HCT116 (cell line): ENCODE measurements at regions of chr17 and their contacts with region 1.

Region 1: DNA sequence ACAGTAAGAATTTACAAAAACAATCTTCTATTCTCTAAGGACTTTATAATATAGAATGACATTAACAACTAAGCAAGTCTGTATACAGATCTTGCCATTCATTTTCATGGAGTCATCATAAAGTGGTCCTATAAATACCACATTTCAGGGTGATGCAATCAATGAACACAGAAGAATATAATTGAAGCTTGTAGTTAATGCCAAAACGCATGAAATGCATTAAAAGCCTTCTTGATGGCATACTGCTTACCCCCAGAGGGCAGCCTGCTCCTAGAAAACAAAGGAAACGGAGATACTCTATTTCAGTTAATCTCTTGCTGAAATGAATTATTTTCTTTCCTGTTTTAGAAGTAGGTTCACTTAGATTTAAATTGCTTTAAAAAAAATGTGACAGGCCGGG is 45.2 kb upstream of the STAC2 start:
- DNase-seq: peak; percentile 8
- ATAC-seq: no peak
- H3K4me3 ChIP-seq: no peak overlapping the region
- H3K27ac ChIP-seq: no peak overlapping the region
- H3K4me1 ChIP-seq: no peaks in the 10 kb centered on the region
- H3K27me3 ChIP-seq: no peaks in the 10 kb centered on the region
- CTCF ChIP-seq: peak; percentile 23 to 42 (median 32); a peak in 3 of 6 replicates
- POLR2A ChIP-seq: no peak
- RAD21 ChIP-seq: peak; percentile 62

Region 2: DNA sequence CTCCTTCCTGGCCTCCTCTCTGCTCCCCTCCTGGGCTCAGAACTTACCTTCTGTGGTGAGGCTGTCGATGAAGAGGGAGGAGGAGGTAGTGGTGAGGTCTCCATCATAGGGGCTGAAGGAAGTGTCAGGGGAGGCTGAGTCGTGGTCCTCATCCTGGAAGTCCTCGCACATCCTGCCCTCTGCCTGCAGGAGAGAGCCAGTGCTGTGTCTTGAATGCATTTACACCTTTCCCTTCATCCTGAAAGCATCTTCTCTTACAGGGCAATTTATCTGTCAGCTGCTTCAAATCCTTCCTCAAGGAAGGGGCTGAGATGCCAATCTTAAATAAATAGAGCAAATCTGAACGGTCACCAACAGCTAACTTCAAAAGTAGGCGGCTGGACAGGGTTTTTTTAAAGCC is 193.1 kb before region 1 on chr17:
- CTCF ChIA-PET with region 1: no interaction called
- POLR2A ChIA-PET with region 1: no interaction called
- RAD21 ChIA-PET with region 1: no interaction called
- intact Hi-C with region 1: no loop called
- DNase-seq: no peak
- ATAC-seq: no peak
- H3K4me3 ChIP-seq: no peak overlapping the region
- H3K27ac ChIP-seq: no peak overlapping the region
- H3K4me1 ChIP-seq: no peaks in the 10 kb centered on the region
- H3K27me3 ChIP-seq: no peaks in the 10 kb centered on the region
- CTCF ChIP-seq: no peak
- POLR2A ChIP-seq: no peak
- RAD21 ChIP-seq: peak; percentile 18; the same call in 1 of the 2 replicates

Region 3: GRCh38 chr17:39294060-39294459 is 23.1 kb after region 1 on chr17:
- CTCF ChIA-PET with region 1: no interaction called
- POLR2A ChIA-PET with region 1: no interaction called
- RAD21 ChIA-PET with region 1: no interaction called
- intact Hi-C with region 1: no loop called
- DNase-seq: no peak
- ATAC-seq: no peak
- H3K4me3 ChIP-seq: no peak overlapping the region
- H3K27ac ChIP-seq: no peak overlapping the region
- H3K4me1 ChIP-seq: no peaks in the 10 kb centered on the region
- H3K27me3 ChIP-seq: no peaks in the 10 kb centered on the region
- CTCF ChIP-seq: no peak
- POLR2A ChIP-seq: no peak
- RAD21 ChIP-seq: no peak

Region 4: DNA sequence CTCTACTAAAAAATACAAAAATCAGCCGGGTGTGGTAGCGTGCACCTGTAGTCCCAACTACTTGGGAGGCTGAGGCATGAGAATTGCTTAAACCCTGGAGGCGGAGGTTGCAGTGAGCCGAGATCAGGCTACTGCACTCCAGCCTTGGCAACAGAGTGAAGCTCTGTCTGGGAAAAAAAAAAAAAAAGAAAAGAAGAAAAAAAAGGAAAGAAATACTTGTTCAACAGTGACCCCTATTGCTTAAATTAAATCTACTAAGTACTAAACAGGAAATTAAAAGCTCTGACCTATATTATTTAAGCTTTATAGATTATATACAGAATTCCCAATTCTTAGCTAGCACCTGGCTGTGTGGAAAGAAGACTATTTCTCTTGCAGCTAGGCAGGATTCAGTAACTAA is 81.6 kb after region 1 on chr17:
- CTCF ChIA-PET with region 1: interaction called, 10 read pairs
- POLR2A ChIA-PET with region 1: no interaction called
- RAD21 ChIA-PET with region 1: interaction called in 1 of 2 experiments, 3 read pairs
- intact Hi-C with region 1: no loop called
- DNase-seq: no peak
- ATAC-seq: no peak
- H3K4me3 ChIP-seq: no peak overlapping the region
- H3K27ac ChIP-seq: no peak overlapping the region
- H3K4me1 ChIP-seq: no peaks in the 10 kb centered on the region
- H3K27me3 ChIP-seq: no peaks in the 10 kb centered on the region
- CTCF ChIP-seq: no peak
- POLR2A ChIP-seq: no peak
- RAD21 ChIP-seq: 0 out of 2 replicates have a peak, but pooled peaks have one; percentile 26

Region 5: GRCh38 chr17:39385040-39385439 is 114.1 kb after region 1 on chr17:
- CTCF ChIA-PET with region 1: no interaction called
- POLR2A ChIA-PET with region 1: no interaction called
- RAD21 ChIA-PET with region 1: no interaction called
- intact Hi-C with region 1: no loop called
- DNase-seq: no peak
- ATAC-seq: no peak
- H3K4me3 ChIP-seq: no peak overlapping the region
- H3K27ac ChIP-seq: no peak overlapping the region
- H3K4me1 ChIP-seq: no peaks in the 10 kb centered on the region
- H3K27me3 ChIP-seq: no peaks in the 10 kb centered on the region
- CTCF ChIP-seq: no peak
- POLR2A ChIP-seq: no peak
- RAD21 ChIP-seq: no peak